WTC11 (cell line): ENCODE measurements at regions of chr15 and their contacts with region 1.

Region 1: GRCh38 chr15:44426975-44427755 is at the start of gene CTDSPL2:
- DNase-seq: peak; percentile 98
- ATAC-seq: peak; percentile 98
- H3K4me3 Mint-ChIP-seq: peak within 1 kb of the TSS; percentile 95
- H3K27ac Mint-ChIP-seq: peak within 1 kb of the TSS; percentile 100
- H3K4me1 Mint-ChIP-seq: peaks cover 19% of the 10 kb centered on the region
- H3K27me3 Mint-ChIP-seq: no peaks in the 10 kb centered on the region; the same call in 1 of the 2 replicates
- CTCF ChIP-seq: no peak
- total RNA-seq, gene CTDSPL2: 56.8 to 65.2 TPM (median 61.8 TPM) in 3 replicates

Region 2: GRCh38 chr15:44286814-44287452 is 140.2 kb before region 1 on chr15:
- CTCF ChIA-PET with region 1: interaction called, 6 read pairs
- POLR2A ChIA-PET with region 1: interaction called, 21 read pairs
- DNase-seq: no peak
- ATAC-seq: no peak
- H3K4me3 Mint-ChIP-seq: peak overlapping the region; percentile 93
- H3K27ac Mint-ChIP-seq: 0 out of 2 replicates have a peak overlapping the region, but pooled peaks have one; percentile 98
- H3K4me1 Mint-ChIP-seq: peaks cover 27% of the 10 kb centered on the region
- H3K27me3 Mint-ChIP-seq: no peaks in the 10 kb centered on the region
- CTCF ChIP-seq: no peak

Region 3: DNA sequence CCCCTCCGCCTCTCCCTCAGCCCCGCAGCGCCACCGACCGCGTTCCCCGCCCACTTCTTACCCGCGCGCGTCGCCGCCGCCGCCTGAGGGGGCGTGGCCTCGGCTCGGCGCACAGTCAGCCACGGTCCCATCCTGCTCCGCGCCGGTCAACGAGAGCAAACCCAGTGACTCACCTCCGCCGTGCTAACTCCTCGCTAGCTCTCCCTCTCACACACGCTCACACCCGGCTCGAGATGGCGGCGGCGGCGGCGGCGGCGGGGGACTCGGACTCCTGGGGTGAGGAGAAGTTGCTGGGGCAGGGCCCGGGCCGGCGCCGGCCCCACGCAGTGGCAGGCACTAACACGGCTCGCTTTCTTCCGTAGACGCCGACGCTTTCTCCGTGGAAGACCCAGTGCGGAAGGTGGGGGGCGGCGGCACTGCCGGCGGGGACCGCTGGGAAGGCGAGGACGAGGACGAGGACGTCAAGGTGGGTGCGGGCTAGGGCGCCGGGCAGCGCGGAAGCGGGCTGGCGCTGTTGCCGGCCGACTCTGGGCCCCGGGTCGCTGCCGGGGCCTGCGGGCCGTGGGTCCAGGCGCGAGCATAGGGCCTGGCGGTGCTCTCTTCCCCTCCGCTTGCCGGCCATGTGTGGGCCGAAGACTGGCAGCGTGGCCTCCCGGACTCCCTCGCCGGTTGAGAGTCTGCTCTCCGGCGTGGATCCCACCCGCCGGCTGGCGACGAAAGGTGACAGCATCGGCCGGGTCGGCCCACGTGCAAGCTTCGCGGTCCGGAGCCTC is 110.0 kb after region 1 on chr15 and contains the start of gene EIF3J:
- CTCF ChIA-PET with region 1: interaction called, 3 read pairs
- POLR2A ChIA-PET with region 1: interaction called, 10 read pairs
- DNase-seq: peak; percentile 90
- ATAC-seq: peak; percentile 90
- H3K4me3 Mint-ChIP-seq: peak within 1 kb of the TSS; percentile 89
- H3K27ac Mint-ChIP-seq: peak within 1 kb of the TSS; percentile 99
- H3K4me1 Mint-ChIP-seq: peaks cover 24% of the 10 kb centered on the region
- H3K27me3 Mint-ChIP-seq: no peaks in the 10 kb centered on the region
- CTCF ChIP-seq: no peak
- total RNA-seq, gene EIF3J: 74.9 to 78.6 TPM (median 76.1 TPM) in 3 replicates